ENCODE measurements at regions of chr19 and their contacts with region 1.

Region 1: GRCh38 chr19:41945135-41945766 is 13.9 kb downstream of the RABAC1 start:
- DNase-seq: no peak

Region 2: DNA sequence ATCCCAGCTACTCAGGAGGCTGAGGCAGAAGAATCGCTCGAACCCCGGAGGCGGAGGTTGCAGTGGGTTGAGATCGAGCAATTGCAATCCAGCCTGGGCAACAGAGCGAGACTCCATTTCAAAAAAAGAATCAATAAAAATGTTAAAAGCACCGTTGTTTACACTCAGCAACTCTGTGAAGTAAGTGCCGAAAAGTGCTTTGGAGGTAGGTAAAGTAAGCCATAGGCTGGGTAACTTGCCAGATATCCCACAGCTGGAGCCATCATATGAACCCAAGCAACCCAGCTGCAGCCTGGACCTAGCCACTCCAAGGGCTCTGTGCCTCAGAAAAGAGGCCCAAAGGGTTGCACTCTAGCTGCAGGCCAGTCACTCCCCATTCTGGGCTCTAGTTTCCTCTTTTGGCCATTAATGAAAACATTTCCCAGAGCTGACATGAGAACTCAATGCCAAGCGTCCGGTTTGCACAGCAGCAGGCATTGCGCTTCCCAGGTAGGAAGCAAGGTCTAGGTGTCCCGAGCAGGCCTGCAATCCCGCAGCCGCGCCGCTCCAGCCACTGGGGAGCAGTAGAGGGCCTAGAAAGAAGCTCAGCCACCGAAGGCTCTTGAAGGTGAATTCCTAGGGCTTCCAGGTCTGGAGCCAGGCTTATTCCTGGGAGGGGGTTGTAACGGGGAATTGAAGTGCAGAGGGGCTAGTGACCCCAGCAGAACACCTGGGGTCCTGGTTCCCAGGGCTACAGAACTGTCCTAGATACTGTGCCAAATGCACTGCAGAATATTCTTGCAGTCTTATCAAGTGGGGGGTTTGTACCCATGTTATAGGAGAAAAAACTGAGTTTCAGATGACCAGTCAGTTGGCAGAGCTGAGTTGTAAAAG is 72.2 kb before region 1 on chr19:
- in situ Hi-C with region 1: loop called (anchors 10 kb)
- DNase-seq: peak; percentile 88

Region 3: GRCh38 chr19:41991026-41991448 is 45.8 kb after region 1 on chr19:
- in situ Hi-C with region 1: no loop called
- DNase-seq: no peak